ENCODE measurements at regions of chr4 and their contacts with region 1.

Region 1: GRCh38 chr4:37452952-37453280 is 208.4 kb downstream of the NWD2 start:
- DNase-seq: peak; percentile 38 to 79
- ATAC-seq: peak; percentile 86 to 90
- H3K4me3 ChIP-seq: peak overlapping the region; percentile 54; the same call in 2 of the 3 replicates
- H3K27ac ChIP-seq: no peak overlapping the region
- H3K4me1 ChIP-seq: peaks cover 9% of the 10 kb centered on the region; the same call in 1 of the 3 replicates
- CTCF ChIP-seq: peak; percentile 59
- EP300 ChIP-seq: no peak
- POLR2A ChIP-seq: no peak
- RAD21 ChIP-seq: peak; percentile 71 to 76

Region 2: GRCh38 chr4:36891971-36892370 is 560.9 kb before region 1 on chr4:
- CTCF ChIA-PET with region 1: no interaction called
- POLR2A ChIA-PET with region 1: no interaction called
- DNase-seq: no peak
- ATAC-seq: no peak
- H3K4me3 ChIP-seq: no peak overlapping the region
- H3K27ac ChIP-seq: no peak overlapping the region
- H3K4me1 ChIP-seq: no peaks in the 10 kb centered on the region
- CTCF ChIP-seq: no peak
- EP300 ChIP-seq: no peak
- POLR2A ChIP-seq: no peak
- RAD21 ChIP-seq: no peak

Region 3: DNA sequence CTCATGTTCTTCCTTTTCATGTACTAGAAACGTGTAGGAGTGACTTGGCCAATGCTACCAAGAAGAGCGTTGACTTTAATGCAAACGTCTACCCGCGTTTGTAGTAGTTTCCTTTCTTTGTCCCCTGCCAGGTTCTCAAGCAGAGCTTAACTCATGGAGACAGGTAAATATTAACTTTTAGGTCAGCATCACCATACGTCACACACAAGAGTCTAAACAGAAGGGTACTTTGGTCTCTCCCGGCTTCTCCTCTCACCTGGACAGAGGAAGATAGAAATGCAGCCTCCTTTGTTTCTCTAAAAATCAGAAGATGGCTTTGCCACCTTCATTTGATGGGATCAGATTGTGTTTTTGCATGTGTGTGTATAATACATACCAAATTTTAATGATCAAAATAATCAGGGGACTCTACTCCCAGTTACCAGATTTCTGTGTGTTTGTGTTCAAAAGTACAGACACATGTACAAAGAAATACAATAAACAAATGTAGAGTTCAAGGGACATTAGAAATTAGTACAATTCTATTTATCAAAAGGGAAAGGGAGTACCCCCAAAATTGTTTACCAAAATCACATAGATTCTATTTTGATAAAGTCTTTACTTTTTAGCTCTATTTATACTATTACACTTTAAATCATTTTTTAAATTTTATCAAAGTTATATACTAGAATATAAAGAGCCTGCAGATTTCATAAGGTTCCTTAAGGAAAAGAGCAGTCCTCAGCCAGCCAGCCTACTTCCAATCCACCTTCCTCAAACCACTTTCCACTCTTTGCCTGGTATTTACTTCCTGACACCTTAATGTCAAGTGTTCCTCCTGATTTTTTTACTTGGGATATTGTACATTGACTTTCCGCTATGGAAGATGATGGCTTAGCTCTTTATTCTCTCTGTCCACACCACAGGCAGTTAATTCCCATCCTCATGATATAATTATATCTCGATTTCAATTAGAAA is 37.8 kb after region 1 on chr4:
- CTCF ChIA-PET with region 1: no interaction called
- POLR2A ChIA-PET with region 1: no interaction called
- DNase-seq: no peak
- ATAC-seq: no peak
- H3K4me3 ChIP-seq: no peak overlapping the region
- H3K27ac ChIP-seq: no peak overlapping the region
- H3K4me1 ChIP-seq: no peaks in the 10 kb centered on the region
- CTCF ChIP-seq: no peak
- EP300 ChIP-seq: no peak
- POLR2A ChIP-seq: no peak
- RAD21 ChIP-seq: no peak

Region 4: GRCh38 chr4:37561803-37562207 is 108.9 kb after region 1 on chr4:
- CTCF ChIA-PET with region 1: interaction called, 19 read pairs
- POLR2A ChIA-PET with region 1: no interaction called
- DNase-seq: peak in 1 of 2 experiments; percentile 69
- ATAC-seq: peak; percentile 61 to 64; a peak in 4 of 6 replicates
- H3K4me3 ChIP-seq: no peak overlapping the region
- H3K27ac ChIP-seq: no peak overlapping the region
- H3K4me1 ChIP-seq: peaks cover 13% of the 10 kb centered on the region; the same call in 1 of the 3 replicates
- CTCF ChIP-seq: no peak
- EP300 ChIP-seq: no peak
- POLR2A ChIP-seq: no peak
- RAD21 ChIP-seq: no peak

Region 5: GRCh38 chr4:37567841-37568240 is 114.9 kb after region 1 on chr4:
- CTCF ChIA-PET with region 1: interaction called, 19 read pairs
- POLR2A ChIA-PET with region 1: no interaction called
- DNase-seq: no peak
- ATAC-seq: no peak
- H3K4me3 ChIP-seq: no peak overlapping the region
- H3K27ac ChIP-seq: no peak overlapping the region
- H3K4me1 ChIP-seq: no peaks in the 10 kb centered on the region; the same call in 2 of the 3 replicates
- CTCF ChIP-seq: no peak
- EP300 ChIP-seq: no peak
- POLR2A ChIP-seq: no peak
- RAD21 ChIP-seq: no peak

Region 6: GRCh38 chr4:37802068-37802666 is 349.3 kb after region 1 on chr4:
- CTCF ChIA-PET with region 1: interaction called, 18 read pairs
- POLR2A ChIA-PET with region 1: no interaction called
- DNase-seq: peak; percentile 27 to 79
- ATAC-seq: peak; percentile 94 to 99
- H3K4me3 ChIP-seq: no peak overlapping the region
- H3K27ac ChIP-seq: no peak overlapping the region
- H3K4me1 ChIP-seq: no peaks in the 10 kb centered on the region
- CTCF ChIP-seq: peak; percentile 67
- EP300 ChIP-seq: no peak
- POLR2A ChIP-seq: no peak
- RAD21 ChIP-seq: peak; percentile 72 to 77

Measured in A549 (cell line).